Motor neuron (in vitro differentiated cells): ENCODE measurements at regions of chr9 and their contacts with region 1.

Region 1: DNA sequence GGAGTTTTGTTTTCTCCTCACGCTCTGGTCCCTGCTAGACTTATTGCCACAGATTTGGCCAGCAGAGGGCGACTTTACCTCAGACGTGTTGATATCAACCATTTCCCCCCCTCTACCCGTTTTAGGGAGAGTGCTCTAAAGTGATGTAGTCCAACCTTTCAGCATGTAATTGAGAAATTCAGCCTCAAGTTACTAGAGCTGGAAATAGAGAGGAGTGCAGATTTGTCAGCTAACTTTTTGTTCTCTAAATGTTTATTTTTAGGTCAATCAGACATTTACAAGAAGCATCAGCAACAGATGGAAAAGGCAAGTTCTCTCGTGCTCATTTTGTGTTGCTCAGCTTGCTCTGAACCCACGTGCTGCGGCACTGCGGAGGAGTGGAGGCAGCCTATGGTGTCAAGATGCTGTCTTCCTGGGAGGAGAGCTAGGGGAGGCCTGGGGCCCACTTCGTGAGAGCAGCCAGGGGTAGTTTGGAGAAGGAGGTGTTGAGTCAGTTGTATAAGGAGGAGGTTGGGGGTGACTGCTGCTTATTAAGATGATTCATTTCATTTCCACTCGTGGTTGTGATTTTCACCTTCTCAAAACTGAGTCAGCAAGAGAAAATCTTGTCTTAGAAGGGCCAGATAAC is 53.6 kb downstream of the GPR107 start:
- ATAC-seq: peak; percentile 60 to 97 (median 78)
- H3K4me3 ChIP-seq: no peak overlapping the region
- H3K27ac ChIP-seq: no peak overlapping the region
- H3K4me1 ChIP-seq: peaks cover 3 to 18% of the 10 kb centered on the region in 2 donors

Region 2: DNA sequence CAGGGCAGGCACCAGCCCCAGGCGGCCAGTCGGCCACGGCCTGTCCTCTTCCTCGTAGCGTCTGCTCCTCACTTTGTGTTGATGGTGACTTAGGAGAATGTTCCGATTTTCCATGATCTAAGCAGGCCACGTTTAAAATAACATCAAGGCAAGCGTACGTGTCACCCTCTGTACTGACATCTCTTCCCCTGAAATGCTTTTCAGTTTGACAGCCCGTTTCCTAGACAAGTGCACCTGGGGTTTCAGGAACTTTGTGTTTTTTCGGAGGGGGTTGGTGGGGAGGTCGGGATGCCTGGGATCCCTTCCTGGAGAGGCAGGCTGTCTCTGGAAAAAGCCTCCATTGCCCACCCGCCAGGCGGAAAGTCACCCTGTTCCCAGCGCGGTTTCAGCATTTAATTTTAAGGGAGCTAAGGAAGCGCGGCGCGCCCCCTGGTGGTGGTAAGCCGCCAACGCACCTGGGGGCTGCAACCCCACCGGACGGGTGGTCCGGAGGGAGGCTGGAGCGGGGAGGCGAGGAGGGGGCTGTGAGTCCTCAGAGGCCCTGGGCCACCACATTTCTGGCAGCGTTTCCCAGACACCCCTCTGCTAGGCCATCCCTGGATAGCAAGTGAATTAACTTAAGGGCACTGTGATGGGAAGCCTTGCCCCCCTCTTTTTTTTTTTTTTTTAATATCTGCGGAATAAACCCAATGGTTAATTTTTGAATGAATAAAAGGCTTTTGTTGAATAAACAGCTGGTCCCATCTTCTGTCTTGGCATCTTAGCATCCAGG is 128.7 kb after region 1 on chr9:
- in situ Hi-C with region 1: loop called in 6 of 9 experiments (anchors 10 to 25 kb)
- ATAC-seq: peak; percentile 7 to 57 (median 36)
- H3K4me3 ChIP-seq: no peak overlapping the region
- H3K27ac ChIP-seq: no peak overlapping the region
- H3K4me1 ChIP-seq: peaks cover 20 to 21% of the 10 kb centered on the region in 2 donors

Region 3: GRCh38 chr9:130243015-130243734 is 135.8 kb after region 1 on chr9:
- in situ Hi-C with region 1: loop called in 6 of 9 experiments (anchors 10 to 25 kb)
- ATAC-seq: peak; percentile 41 to 77 (median 72)
- H3K4me3 ChIP-seq: no peak overlapping the region
- H3K27ac ChIP-seq: no peak overlapping the region
- H3K4me1 ChIP-seq: peaks cover 23% of the 10 kb centered on the region in 2 donors

Region 4: DNA sequence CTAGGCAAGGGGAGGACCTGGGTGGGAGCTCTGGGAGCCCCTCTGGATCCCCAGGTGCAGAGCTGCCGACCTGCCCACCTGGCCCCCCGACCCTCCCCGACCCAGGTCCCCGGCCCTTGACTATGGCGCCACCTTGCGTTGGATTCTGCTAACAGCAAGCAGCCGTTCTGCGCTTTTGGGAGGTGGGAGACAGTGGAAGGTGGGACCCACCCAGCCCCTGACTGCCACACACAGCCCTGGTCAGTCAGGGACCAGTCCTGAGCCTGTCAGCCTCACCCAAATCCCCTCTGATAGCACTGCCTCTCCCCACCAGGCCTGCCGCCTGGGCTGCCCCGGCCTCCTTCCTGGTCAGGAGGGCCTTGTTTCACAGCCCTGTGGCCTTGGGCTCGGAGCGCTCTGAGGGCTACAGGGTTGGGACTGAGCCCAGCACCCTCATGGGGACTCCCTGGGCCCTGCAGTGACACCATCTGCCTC is 236.1 kb after region 1 on chr9:
- in situ Hi-C with region 1: loop called in 3 of 9 experiments (anchors 10 to 25 kb)
- ATAC-seq: peak; percentile 25 to 71 (median 44)
- H3K4me3 ChIP-seq: no peak overlapping the region
- H3K27ac ChIP-seq: no peak overlapping the region
- H3K4me1 ChIP-seq: peaks cover 12 to 14% of the 10 kb centered on the region in 2 donors